ENCODE measurements at regions of chr5 and their contacts with region 1.

Region 1: GRCh38 chr5:80864706-80865435 is 95.3 kb upstream of the RASGRF2 start:
- DNase-seq: peak; percentile 41
- H3K4me3 Mint-ChIP-seq: no peak overlapping the region
- H3K27ac Mint-ChIP-seq: no peak overlapping the region
- H3K4me1 Mint-ChIP-seq: peaks cover 48% of the 10 kb centered on the region
- H3K27me3 Mint-ChIP-seq: no peaks in the 10 kb centered on the region

Region 2: DNA sequence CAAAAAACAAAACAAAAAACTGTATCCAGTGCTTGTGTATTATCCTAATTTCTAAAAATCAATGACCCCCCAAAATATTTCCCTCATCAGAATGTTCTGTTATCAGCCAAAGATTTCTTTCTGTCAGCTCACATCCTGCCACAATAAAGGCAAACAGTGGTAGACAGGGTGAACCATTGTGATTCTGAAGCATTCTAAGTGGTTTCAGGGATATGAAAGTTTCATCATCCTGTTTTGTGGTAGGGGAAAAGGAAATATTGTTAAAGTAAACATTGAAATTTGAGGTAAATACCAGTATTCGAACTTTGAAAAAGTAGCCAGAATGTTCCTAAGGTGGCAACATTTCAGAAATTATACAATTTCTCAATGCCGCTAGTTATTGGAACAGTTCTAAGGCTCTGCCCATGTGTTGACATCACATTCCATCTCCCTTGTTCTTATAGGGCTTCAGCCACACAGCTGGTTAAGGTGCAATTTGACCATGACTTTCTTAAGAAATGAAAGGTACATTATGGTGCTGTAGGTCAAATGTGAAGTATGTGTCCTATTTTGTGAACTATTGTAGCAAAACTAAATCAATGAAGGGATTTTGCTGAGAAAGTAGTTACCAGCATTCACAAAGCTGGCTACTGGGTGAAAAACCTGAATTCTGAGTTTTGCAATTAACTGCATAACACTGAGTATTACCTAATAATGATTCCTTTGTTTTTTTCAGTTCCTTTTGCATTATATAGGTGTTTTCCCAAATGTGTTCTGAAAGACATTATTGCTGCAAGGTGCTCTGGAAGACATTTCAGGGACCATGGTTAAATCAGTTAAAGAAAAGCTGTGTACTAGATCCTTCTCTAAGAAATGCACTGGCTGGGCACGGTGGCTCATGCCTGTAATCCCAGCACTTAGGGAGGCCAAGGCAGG is 12.3 kb before region 1 on chr5:
- CTCF ChIA-PET with region 1: no interaction called
- POLR2A ChIA-PET with region 1: no interaction called
- intact Hi-C with region 1: no loop called
- DNase-seq: no peak
- H3K4me3 Mint-ChIP-seq: no peak overlapping the region
- H3K27ac Mint-ChIP-seq: no peak overlapping the region
- H3K4me1 Mint-ChIP-seq: peaks cover 14% of the 10 kb centered on the region
- H3K27me3 Mint-ChIP-seq: no peaks in the 10 kb centered on the region

Region 3: GRCh38 chr5:81288021-81288433 is 423.2 kb after region 1 on chr5:
- CTCF ChIA-PET with region 1: no interaction called
- POLR2A ChIA-PET with region 1: no interaction called
- intact Hi-C with region 1: loop called (anchors 5 kb)
- DNase-seq: no peak
- H3K4me3 Mint-ChIP-seq: no peak overlapping the region
- H3K27ac Mint-ChIP-seq: no peak overlapping the region
- H3K4me1 Mint-ChIP-seq: peaks cover 54% of the 10 kb centered on the region
- H3K27me3 Mint-ChIP-seq: no peaks in the 10 kb centered on the region

Measured in activated CD4-positive, alpha-beta memory T cell treated with anti-CD3 and anti-CD28 coated beads for 36 hours (primary cell).